Heart left ventricle (tissue), 16 donors: ENCODE measurements at regions of chr10 and their contacts with region 1.

Region 1: DNA sequence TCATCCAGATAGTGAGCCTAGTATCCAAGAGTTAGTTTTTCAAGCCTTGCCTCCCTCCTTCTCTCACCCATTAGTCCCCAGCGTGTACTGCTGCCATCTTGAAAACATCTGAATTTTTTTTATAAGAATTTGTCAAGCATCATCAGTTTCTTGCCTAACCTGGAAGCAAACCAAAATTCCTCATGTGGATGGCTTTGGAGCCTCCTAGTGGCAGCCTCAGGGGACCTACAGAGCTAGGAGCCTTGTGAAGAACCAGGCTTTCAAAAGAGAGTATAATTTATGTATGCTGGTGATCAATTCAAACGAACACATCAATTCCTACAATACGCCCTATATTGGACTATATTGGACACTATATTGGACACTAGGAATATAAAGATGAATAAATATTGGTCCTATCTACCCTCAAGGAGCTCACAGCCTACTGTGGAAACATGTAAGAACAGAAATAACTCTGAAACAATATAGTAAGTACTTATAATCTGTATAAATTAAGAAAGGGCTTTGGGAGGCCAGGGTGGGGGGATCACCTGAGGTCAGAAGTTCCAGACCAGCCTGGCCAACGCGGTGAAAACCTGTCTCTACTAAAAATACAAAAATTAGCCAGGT is 63.4 kb downstream of the HPSE2 start:
- DNase-seq: no peak
- ATAC-seq: peak in 1 of 4 donors; percentile 42
- H3K4me3 ChIP-seq: no peak overlapping the region
- H3K27ac ChIP-seq: no peak overlapping the region
- H3K4me1 ChIP-seq: no peaks in the 10 kb centered on the region
- H3K27me3 ChIP-seq: peaks cover 0 to 7% (median 0%) of the 10 kb centered on the region in 9 donors
- CTCF ChIP-seq: peak in 10 of 12 donors; percentile 9 to 57 (median 44)
- POLR2A ChIP-seq: no peak

Region 2: DNA sequence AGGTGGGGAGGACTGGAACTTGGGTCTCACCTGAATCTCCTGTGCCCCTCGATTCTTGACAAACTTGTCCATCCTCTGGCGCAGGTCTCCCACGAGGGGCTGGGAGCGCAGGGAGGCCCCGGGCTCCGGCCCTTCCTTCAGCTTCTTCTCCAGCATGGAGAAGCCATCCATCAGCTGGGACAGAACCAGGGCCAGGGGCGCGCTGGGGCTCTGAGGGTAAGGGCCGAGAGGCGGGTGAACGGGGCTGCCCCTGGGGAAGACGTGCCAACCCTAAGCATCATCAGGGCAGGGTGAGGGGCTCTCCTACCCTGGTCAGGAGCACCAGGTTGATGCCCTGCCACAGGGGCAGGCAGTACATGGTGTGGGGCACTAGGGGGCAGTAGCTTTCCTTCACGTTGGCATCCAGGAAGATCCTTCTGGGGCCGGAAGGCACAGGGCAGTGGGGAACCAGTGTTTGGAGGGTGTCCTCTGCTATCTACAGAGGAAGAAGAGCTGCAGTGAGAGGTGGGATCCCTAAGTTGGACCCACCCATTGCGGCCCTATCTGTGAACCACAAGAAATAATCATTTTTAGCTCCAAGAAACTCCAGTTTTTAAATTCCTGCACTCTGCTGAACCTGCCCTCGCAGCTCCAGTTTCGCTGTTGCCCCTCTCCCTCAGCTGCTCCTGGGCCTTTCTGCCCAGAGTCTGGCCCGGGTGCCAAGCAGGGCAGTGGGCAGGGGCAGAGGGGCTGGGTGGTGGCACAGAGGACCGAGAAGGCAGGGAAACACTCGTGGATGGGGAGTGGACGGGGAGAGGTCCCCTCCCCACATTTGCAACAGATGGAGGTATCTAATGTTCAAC is 746.5 kb before region 1 on chr10:
- intact Hi-C with region 1: loop called in 1 of 10 experiments (anchors 10 kb)
- DNase-seq: peak in 2 of 5 donors; percentile 24 to 52
- ATAC-seq: peak; percentile 28 to 58 (median 54)
- H3K4me3 ChIP-seq: no peak overlapping the region
- H3K27ac ChIP-seq: no peak overlapping the region
- H3K4me1 ChIP-seq: peaks cover 0 to 8% (median under 1%) of the 10 kb centered on the region in 12 donors
- H3K27me3 ChIP-seq: no peaks in the 10 kb centered on the region
- CTCF ChIP-seq: peak; percentile 58 to 78 (median 66)
- POLR2A ChIP-seq: no peak

Region 3: DNA sequence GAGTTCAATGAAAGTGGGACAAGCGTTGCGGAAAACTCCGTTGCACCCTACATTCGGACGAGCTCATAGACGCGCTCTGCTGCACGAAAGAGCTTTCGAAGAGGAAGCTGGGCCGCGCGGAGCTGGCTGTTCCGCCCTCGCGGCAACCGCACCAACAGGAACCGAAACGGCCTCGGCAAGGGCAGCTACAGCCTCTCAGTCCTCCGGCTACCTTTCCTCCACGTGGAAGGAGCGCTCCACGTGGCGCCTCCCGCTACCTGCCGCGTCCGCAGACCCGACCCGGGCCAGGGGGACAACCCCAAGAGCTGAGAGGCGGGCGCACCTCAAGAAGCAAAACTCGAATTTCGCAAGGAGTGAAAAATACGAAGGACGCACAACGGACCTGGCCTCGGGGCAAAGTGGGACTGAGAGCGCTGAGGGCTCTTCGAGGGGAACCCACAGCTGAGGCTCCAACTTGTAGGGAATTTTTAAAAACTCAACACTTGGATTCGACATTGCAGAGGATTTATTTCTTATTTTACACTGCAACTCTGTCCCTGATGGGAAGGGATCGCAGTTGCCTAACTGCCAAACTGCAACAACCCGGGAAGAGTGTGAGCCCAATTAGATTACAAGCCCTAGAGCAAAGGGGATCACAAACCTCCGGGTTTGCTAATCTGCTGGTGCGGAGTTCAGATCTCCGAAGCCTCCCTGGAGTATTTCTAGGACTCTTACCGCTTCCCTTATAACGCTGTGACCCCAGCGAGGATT is 62.0 kb after region 1 on chr10:
- intact Hi-C with region 1: no loop called
- DNase-seq: peak; percentile 25 to 74 (median 50)
- ATAC-seq: peak in 3 of 4 donors; percentile 62 to 76 (median 72)
- H3K4me3 ChIP-seq: peak overlapping the region; percentile 12 to 59 (median 48)
- H3K27ac ChIP-seq: peak overlapping the region in 1 of 12 donors; percentile 64
- H3K4me1 ChIP-seq: peaks cover 0 to 43% (median 23%) of the 10 kb centered on the region in 12 donors
- H3K27me3 ChIP-seq: peaks cover 31 to 97% (median 65%) of the 10 kb centered on the region in 9 donors
- CTCF ChIP-seq: no peak
- POLR2A ChIP-seq: no peak

Region 4: GRCh38 chr10:99276848-99277486 is 104.7 kb after region 1 on chr10:
- intact Hi-C with region 1: no loop called
- DNase-seq: no peak
- ATAC-seq: no peak
- H3K4me3 ChIP-seq: no peak overlapping the region
- H3K27ac ChIP-seq: no peak overlapping the region
- H3K4me1 ChIP-seq: no peaks in the 10 kb centered on the region
- H3K27me3 ChIP-seq: peaks cover 0 to 16% (median 0%) of the 10 kb centered on the region in 9 donors
- CTCF ChIP-seq: peak in 1 of 12 donors; percentile 9
- POLR2A ChIP-seq: no peak